Naive thymus-derived CD4-positive, alpha-beta T cell (primary cell): ENCODE measurements at regions of chr14 and their contacts with region 1.

Region 1: GRCh38 chr14:32576088-32576795 is 247.1 kb downstream of the AKAP6 start:
- DNase-seq: peak in 7 of 9 donors; percentile 19 to 44 (median 30)
- ATAC-seq: peak; percentile 76
- H3K4me3 ChIP-seq: no peak overlapping the region
- H3K4me3 Mint-ChIP-seq: no peak overlapping the region
- H3K27ac ChIP-seq: no peak overlapping the region
- H3K27ac Mint-ChIP-seq: no peak overlapping the region
- H3K4me1 ChIP-seq: no peaks in the 10 kb centered on the region
- H3K4me1 Mint-ChIP-seq: no peaks in the 10 kb centered on the region
- H3K27me3 ChIP-seq: no peaks in the 10 kb centered on the region
- H3K27me3 Mint-ChIP-seq: peaks cover 0 to 29% (median 6%) of the 10 kb centered on the region in 5 donors

Region 2: DNA sequence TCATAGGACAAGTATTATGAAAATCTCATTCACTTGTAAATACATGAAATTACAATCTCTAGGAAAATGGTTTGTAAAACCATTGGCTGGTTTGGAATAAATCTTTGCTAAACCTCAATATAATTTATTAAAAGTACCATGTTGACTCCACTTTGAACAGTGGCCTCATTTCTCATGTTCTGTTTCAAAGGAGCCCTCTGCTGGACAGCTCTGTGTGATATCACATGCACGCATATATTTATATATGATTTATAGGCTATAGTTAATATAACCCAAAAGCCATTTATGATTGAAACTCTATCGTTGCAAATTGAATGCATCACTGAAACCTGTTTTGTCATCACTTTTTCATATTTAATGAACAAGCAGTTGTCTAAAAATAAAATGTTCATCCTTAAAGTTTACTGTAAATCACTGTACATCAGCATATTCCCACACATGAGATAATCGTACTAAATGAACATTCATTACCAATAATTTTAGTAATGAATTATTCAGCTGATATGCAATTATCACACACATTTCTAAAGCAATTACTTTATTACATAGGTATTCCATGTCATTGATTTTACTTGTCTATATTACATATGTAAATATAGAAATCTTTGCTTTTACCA is 856.3 kb after region 1 on chr14:
- CTCF ChIA-PET with region 1: no interaction called
- POLR2A ChIA-PET with region 1: no interaction called
- intact Hi-C with region 1: loop called in 1 of 2 experiments (anchors 2 kb)
- DNase-seq: no peak
- ATAC-seq: no peak
- H3K4me3 ChIP-seq: no peak overlapping the region
- H3K4me3 Mint-ChIP-seq: no peak overlapping the region
- H3K27ac ChIP-seq: no peak overlapping the region
- H3K27ac Mint-ChIP-seq: no peak overlapping the region
- H3K4me1 ChIP-seq: no peaks in the 10 kb centered on the region
- H3K4me1 Mint-ChIP-seq: peaks cover 0 to 15% (median 3%) of the 10 kb centered on the region in 7 donors
- H3K27me3 ChIP-seq: no peaks in the 10 kb centered on the region
- H3K27me3 Mint-ChIP-seq: peaks cover 0 to 4% (median 0%) of the 10 kb centered on the region in 5 donors

Region 3: GRCh38 chr14:33792720-33793368 is 1216.6 kb after region 1 on chr14:
- CTCF ChIA-PET with region 1: interaction called, 5 read pairs
- POLR2A ChIA-PET with region 1: no interaction called
- intact Hi-C with region 1: loop called in 1 of 2 experiments (anchors 1 kb)
- DNase-seq: peak; percentile 10 to 72 (median 36)
- ATAC-seq: peak; percentile 72
- H3K4me3 ChIP-seq: no peak overlapping the region
- H3K4me3 Mint-ChIP-seq: peak overlapping the region; percentile 42 to 72 (median 67)
- H3K27ac ChIP-seq: no peak overlapping the region
- H3K27ac Mint-ChIP-seq: no peak overlapping the region
- H3K4me1 ChIP-seq: no peaks in the 10 kb centered on the region
- H3K4me1 Mint-ChIP-seq: peaks cover 10 to 21% (median 16%) of the 10 kb centered on the region in 7 donors
- H3K27me3 ChIP-seq: no peaks in the 10 kb centered on the region
- H3K27me3 Mint-ChIP-seq: peaks cover 36 to 56% (median 42%) of the 10 kb centered on the region in 5 donors

Region 4: GRCh38 chr14:34300882-34301734 is 1724.9 kb after region 1 on chr14:
- CTCF ChIA-PET with region 1: no interaction called
- POLR2A ChIA-PET with region 1: no interaction called
- intact Hi-C with region 1: loop called in 1 of 2 experiments (anchors 1 kb)
- DNase-seq: no peak
- ATAC-seq: peak; percentile 32
- H3K4me3 ChIP-seq: no peak overlapping the region
- H3K4me3 Mint-ChIP-seq: no peak overlapping the region
- H3K27ac ChIP-seq: no peak overlapping the region
- H3K27ac Mint-ChIP-seq: no peak overlapping the region
- H3K4me1 ChIP-seq: no peaks in the 10 kb centered on the region
- H3K4me1 Mint-ChIP-seq: peaks cover 0 to 1% (median 0%) of the 10 kb centered on the region in 7 donors
- H3K27me3 ChIP-seq: no peaks in the 10 kb centered on the region
- H3K27me3 Mint-ChIP-seq: peaks cover 2 to 16% (median 9%) of the 10 kb centered on the region in 5 donors

Region 5: DNA sequence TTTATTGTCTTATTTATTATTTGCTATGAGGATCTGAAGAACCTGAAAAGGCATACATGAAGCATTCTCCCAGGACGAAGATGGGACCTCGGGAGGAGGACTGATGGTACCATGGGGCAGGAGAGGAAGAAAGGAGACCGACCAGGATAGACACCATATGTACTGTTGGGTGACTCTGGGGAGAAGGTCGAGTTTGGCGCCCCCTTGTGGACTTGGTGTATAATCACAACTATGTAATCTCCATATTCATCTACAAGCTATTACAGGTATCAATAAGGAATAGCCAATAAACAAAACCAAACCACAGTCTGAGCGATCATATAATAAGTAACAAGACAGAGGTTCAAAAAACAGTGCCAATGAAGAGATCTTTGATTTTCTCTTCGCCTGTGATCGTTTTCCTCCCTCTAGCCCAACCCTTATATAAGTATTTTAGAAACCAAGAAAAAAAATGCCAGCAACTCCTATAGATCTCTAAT is 1746.7 kb after region 1 on chr14:
- CTCF ChIA-PET with region 1: no interaction called
- POLR2A ChIA-PET with region 1: no interaction called
- intact Hi-C with region 1: loop called in 1 of 2 experiments (anchors 1 kb)
- DNase-seq: peak; percentile 15 to 66 (median 54)
- ATAC-seq: peak; percentile 86
- H3K4me3 ChIP-seq: no peak overlapping the region
- H3K4me3 Mint-ChIP-seq: no peak overlapping the region
- H3K27ac ChIP-seq: no peak overlapping the region
- H3K27ac Mint-ChIP-seq: no peak overlapping the region
- H3K4me1 ChIP-seq: no peaks in the 10 kb centered on the region
- H3K4me1 Mint-ChIP-seq: peaks cover 0 to 5% (median 0%) of the 10 kb centered on the region in 7 donors
- H3K27me3 ChIP-seq: no peaks in the 10 kb centered on the region
- H3K27me3 Mint-ChIP-seq: peaks cover 0 to 15% (median 4%) of the 10 kb centered on the region in 5 donors